H1 (cell line): ENCODE measurements at regions of chr14 and their contacts with region 1.

Region 1: DNA sequence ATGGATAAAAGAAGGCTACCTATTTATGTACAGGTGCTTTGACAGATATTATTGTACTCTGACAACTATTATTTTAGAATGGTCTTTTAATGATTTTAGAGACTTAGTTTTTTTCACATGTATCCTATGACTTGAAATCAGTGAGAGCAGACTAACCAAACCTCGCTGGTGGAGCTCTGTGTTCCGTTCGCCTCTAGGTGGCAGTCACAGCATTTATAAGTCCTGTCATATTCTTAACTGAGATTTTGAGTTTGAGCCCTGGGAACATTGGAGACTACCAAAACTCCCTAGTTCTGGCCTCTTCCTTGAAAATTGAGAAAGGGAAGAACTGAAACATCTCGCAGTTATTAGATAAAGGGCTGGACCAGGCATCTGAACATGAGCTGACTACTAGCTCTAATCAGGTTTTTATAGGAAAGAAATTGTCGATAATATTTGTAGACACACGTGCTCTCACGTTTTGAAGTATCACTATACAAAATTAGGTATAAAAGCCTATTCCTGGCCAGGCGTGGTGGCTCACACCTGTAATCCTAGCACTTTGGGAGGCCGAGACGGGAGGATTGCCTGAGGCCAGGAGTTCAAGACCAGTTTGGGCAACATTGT is 48.3 kb downstream of the TTLL5 start:
- DNase-seq: peak; percentile 44 to 56
- H3K4me3 ChIP-seq: no peak overlapping the region
- H3K27ac ChIP-seq: no peak overlapping the region
- H3K4me1 ChIP-seq: peaks cover 0 to 14% (median 5%) of the 10 kb centered on the region in 4 experiments; a peak in 6 of 7 replicates
- H3K27me3 ChIP-seq: no peaks in the 10 kb centered on the region
- CTCF ChIP-seq: peak; percentile 49 to 77 (median 69)
- EP300 ChIP-seq: no peak
- POLR2A ChIP-seq: no peak
- RAD21 ChIP-seq: peak; percentile 77 to 80

Region 2: DNA sequence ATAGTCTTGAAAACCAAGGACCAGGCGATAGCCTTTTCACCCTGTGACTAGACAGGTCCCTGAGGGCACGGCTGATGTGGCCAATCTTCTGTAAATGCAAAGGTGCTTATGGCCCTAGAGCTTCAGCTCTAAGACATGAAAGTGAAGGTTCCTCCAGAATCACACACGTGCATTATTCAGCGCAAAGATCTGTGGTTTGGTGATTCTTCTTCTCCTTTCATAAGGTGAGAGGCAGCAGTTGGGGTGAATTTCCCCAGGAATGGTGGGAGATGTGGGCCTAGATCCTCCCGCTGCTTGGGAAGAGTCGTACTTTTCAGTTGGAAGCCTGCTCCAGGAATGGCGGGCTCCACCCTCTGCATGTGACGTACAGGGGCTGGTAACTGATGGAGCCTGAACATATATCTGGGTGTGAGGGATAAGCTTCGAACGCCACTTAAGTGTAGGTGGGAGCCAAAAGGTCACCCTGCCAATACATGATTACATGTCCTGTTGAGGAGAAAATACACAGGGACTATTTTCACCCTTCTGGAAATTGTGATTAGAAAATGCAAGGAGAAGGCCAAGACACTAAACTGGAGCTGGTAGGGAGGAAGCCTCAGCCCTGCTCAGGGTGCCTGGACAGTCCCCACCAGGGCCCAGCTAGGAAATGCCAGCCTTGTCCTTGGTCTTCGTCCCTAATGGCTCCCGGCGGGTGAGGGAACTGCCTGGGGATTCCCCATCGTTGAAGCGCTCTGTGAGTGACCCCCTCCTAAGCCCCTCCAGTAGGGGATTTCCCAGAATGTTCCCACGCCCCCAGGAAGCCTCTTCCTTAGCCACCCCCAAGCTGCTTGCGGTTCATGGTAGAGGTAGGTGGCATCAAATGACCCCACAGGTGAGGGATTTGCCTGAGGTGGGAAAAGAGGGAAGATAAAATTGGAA is 169.5 kb before region 1 on chr14:
- CTCF ChIA-PET with region 1: no interaction called
- POLR2A ChIA-PET with region 1: no interaction called
- DNase-seq: no peak
- H3K4me3 ChIP-seq: no peak overlapping the region
- H3K27ac ChIP-seq: no peak overlapping the region; the same call in 1 of the 2 replicates
- H3K4me1 ChIP-seq: peaks cover 0 to 6% (median 4%) of the 10 kb centered on the region in 4 experiments; a peak in 4 of 7 replicates
- H3K27me3 ChIP-seq: no peaks in the 10 kb centered on the region
- CTCF ChIP-seq: no peak
- EP300 ChIP-seq: peak in 1 of 2 experiments; percentile 8; a peak in 1 of 3 replicates
- POLR2A ChIP-seq: no peak
- RAD21 ChIP-seq: no peak

Region 3: DNA sequence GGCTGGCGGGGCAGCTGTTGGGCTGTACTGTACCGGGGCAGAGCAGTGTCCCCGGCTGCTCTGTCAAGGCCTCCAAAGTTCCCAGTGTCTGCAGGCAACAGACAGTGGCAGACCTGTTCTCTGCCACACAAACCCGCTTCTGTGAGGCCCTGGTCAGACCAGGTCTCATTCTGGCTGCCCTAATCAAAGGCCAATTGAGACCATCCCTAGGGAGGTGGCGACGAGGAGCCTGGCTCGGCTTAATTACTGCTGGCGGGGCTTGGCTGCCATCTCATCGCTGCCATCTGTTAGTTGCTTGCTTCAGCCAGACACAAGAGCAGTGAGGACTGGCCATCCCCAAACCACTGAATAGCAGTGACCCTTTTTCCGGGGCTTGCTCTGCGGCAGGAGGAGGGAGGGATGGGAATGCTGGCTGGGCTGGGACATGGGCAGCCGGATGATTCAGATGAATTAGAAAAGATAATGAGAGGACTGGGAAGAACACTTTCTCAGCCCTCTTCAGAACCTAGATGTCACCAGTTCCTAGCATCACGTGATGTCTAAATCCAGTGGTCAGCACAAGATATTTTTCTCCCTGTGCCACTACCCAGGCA is 73.1 kb before region 1 on chr14:
- CTCF ChIA-PET with region 1: no interaction called
- POLR2A ChIA-PET with region 1: no interaction called
- DNase-seq: no peak
- H3K4me3 ChIP-seq: no peak overlapping the region
- H3K27ac ChIP-seq: no peak overlapping the region
- H3K4me1 ChIP-seq: peaks cover 4 to 19% (median 14%) of the 10 kb centered on the region in 4 experiments
- H3K27me3 ChIP-seq: no peaks in the 10 kb centered on the region
- CTCF ChIP-seq: no peak
- EP300 ChIP-seq: no peak
- POLR2A ChIP-seq: no peak
- RAD21 ChIP-seq: no peak

Region 4: DNA sequence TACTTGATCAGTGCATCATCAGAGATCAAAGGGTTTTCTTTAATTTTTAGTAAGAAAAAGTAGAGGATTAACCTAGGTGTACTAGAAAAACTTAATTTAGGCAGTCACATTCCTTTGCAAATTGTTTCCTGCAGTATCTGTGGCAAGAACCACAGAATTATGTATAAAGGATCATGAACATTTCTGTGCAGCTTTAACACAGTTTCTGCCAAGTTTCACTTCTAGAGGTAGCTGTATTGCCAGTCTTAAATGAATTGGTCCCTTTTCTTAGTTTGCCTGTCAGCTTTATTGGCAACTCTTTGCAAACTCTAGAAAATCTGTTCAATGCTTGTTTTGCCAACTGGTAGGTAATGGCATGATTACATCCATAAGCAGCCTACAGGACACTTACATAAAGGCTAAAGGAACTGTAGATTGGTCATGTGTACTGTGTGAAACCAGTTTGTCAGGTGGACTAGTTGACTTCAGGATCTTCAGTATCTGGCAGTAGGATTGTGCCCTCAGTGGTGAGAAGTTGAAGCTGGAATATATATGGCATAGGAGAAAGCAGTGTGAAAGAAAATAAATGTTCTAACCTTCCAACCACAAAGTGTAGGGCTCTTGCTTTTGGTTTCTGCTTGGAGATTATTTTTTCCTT is 27.7 kb after region 1 on chr14:
- CTCF ChIA-PET with region 1: interaction called, 13 read pairs
- POLR2A ChIA-PET with region 1: no interaction called
- DNase-seq: no peak
- H3K4me3 ChIP-seq: no peak overlapping the region
- H3K27ac ChIP-seq: no peak overlapping the region
- H3K4me1 ChIP-seq: no peaks in the 10 kb centered on the region; a peak in 1 of 7 replicates
- H3K27me3 ChIP-seq: no peaks in the 10 kb centered on the region
- CTCF ChIP-seq: no peak
- EP300 ChIP-seq: no peak
- POLR2A ChIP-seq: no peak
- RAD21 ChIP-seq: no peak

Region 5: DNA sequence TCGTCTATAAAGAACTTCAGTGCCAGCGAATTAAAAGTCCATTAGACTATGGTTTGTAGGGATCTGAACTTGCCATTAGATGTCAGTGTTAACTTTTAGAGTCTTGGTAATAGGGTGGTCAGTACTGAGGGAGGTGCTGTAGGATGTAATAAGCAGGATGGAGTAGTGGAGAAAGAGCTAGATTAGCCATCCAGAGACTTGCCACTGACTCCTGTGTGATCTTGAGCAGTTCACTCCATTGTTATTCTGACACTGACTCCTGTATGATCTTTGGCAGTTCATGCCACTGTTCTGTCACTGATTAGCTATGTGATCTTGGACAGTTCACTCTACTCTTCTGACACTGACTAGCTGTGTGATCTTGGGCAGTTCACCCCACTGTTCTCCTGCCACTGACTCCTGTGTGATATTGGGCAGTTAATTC is 85.3 kb after region 1 on chr14:
- CTCF ChIA-PET with region 1: interaction called, 42 read pairs
- POLR2A ChIA-PET with region 1: no interaction called
- DNase-seq: no peak
- H3K4me3 ChIP-seq: no peak overlapping the region
- H3K27ac ChIP-seq: no peak overlapping the region
- H3K4me1 ChIP-seq: no peaks in the 10 kb centered on the region
- H3K27me3 ChIP-seq: no peaks in the 10 kb centered on the region
- CTCF ChIP-seq: peak in 2 of 3 experiments; percentile 43 to 52; a peak in 2 of 4 replicates
- EP300 ChIP-seq: no peak
- POLR2A ChIP-seq: no peak
- RAD21 ChIP-seq: peak; percentile 49 to 58

Region 6: DNA sequence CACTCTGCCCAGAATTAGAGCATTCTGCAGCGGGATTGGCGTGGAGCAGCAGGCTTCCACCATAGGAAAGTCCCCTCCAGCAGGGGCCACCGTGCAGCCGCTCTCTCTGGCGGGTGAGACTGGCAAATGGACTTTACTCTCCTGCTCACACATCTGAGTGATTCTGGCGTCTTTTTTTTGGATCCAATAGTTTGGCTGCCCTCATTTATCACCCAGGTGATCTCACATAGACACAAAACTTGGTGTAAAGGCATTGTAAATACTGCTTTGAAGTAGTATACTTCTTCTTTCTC is 142.2 kb after region 1 on chr14:
- CTCF ChIA-PET with region 1: no interaction called
- POLR2A ChIA-PET with region 1: no interaction called
- DNase-seq: no peak
- H3K4me3 ChIP-seq: no peak overlapping the region
- H3K27ac ChIP-seq: no peak overlapping the region
- H3K4me1 ChIP-seq: peaks cover 0 to 5% (median 0%) of the 10 kb centered on the region in 4 experiments; a peak in 1 of 7 replicates
- H3K27me3 ChIP-seq: no peaks in the 10 kb centered on the region
- CTCF ChIP-seq: peak in 1 of 3 experiments; percentile 6; a peak in 1 of 4 replicates
- EP300 ChIP-seq: no peak
- POLR2A ChIP-seq: no peak
- RAD21 ChIP-seq: peak in 1 of 2 experiments; percentile 14; a peak in 1 of 4 replicates

Region 7: DNA sequence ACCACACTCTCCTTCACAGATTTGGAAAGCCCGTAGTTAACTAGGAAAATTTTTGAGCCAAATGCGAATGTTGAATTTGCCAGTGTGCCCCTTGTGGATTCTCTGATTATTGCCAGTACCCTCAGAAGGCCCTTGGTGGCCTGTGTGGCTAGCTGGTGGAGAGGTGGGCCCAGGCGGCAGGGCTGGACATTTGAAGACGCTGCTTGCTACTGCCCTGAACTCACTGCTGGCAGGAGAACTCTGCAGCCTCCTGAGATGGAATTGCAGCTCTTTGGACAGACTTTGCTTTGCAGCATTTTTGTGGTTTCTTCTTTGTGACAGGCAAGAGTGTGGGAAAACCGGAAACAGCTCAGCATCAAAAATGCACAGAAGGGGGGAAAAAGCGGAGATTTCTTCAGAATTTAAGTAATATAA is 174.9 kb after region 1 on chr14:
- CTCF ChIA-PET with region 1: interaction called, 19 read pairs
- POLR2A ChIA-PET with region 1: no interaction called
- DNase-seq: no peak
- H3K4me3 ChIP-seq: no peak overlapping the region
- H3K27ac ChIP-seq: no peak overlapping the region
- H3K4me1 ChIP-seq: no peaks in the 10 kb centered on the region
- H3K27me3 ChIP-seq: no peaks in the 10 kb centered on the region
- CTCF ChIP-seq: peak; percentile 16 to 50 (median 18); a peak in 3 of 4 replicates
- EP300 ChIP-seq: no peak
- POLR2A ChIP-seq: no peak
- RAD21 ChIP-seq: peak in 1 of 2 experiments; percentile 33; a peak in 2 of 4 replicates